ENCODE measurements at regions of chr19 and their contacts with region 1.

Region 1: GRCh38 chr19:7340959-7341837 is 7.5 kb upstream of the ARHGEF18 start:
- DNase-seq: peak; percentile 49
- H3K27ac ChIP-seq: no peak overlapping the region
- CTCF ChIP-seq: peak; percentile 89

Region 2: GRCh38 chr19:7101498-7102253 is 239.5 kb before region 1 on chr19:
- CTCF ChIA-PET with region 1: interaction called, 24 read pairs
- POLR2A ChIA-PET with region 1: no interaction called
- DNase-seq: no peak
- H3K27ac ChIP-seq: no peak overlapping the region
- CTCF ChIP-seq: no peak

Region 3: DNA sequence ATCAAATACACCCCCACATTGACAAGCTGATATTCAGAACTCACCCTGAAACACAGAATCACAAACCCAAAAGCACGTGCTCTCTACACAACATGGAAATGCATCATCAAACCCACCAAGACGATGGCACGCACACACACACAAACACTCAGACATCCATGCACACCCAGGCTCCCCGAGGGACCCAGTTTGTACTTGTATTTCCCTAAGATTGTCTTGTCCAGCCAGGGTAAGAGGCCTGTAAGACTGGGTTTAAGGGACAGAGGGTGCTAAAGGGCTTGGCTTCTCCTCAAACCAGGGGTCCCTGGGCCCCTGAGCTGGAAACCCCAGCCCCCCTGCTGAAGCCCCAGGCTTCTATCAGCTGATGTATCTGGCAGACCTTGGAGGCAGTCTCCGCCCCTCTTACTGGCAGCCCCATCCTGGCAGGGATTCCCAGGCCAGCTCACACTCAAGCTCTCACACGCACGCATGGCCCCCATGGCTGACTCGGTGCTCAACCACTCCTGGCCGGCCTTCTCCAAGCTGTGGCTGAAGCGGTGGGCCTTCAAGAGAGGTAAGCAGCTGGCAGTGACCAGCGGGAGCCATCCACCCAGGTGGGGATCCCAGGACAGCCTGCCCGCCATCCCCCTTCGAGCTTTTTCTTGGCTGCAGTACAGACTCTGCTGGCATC is 14.1 kb after region 1 on chr19:
- CTCF ChIA-PET with region 1: interaction called, 15 read pairs
- POLR2A ChIA-PET with region 1: no interaction called
- DNase-seq: no peak
- H3K27ac ChIP-seq: no peak overlapping the region
- CTCF ChIP-seq: no peak

Measured in RWPE1 (cell line).